ENCODE measurements at regions of chr22 and their contacts with region 1.

Region 1: DNA sequence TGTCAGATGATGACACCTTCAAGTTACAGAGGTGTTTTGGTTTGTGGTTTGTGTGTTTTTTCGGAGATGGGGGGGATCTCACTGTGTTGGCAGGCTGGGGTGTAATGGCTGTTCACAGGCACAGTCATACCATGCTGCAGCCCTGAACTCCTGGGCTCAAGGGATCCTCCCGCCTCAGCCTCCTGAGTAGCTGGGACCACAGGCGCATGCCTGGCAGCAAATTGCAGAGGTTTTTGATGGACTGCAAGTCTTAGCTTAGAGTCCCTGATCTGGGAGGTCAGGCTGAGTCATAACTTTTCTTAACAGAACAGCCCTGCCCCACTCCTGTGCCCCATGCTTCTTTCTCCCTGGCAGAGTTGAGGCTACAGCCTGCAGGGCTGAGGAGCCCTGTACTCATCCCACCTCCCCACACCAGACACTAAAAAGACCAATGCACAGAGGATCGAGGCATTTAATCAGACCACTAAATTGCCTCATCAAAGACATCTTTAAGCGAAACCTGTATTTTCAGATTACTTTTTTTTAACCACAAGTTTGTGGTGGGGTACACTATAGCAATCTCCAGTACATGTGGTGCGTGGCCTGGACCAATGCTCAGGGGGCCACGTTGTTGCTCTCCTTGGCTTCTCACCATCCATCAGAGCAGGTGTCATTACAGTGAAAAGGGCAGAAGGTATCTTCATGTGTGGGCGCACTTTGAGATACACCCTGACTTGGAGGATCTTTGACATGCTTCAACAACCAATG is 17.1 kb upstream of the ADORA2A start:
- DNase-seq: no peak
- H3K4me3 ChIP-seq: no peak overlapping the region
- H3K27ac ChIP-seq: no peak overlapping the region
- H3K4me1 ChIP-seq: no peaks in the 10 kb centered on the region
- H3K27me3 ChIP-seq: no peaks in the 10 kb centered on the region
- CTCF ChIP-seq: no peak
- POLR2A ChIP-seq: no peak

Region 2: GRCh38 chr22:24289114-24289513 is 121.2 kb before region 1 on chr22:
- intact Hi-C with region 1: loop called (anchors 10 kb)
- DNase-seq: no peak
- H3K4me3 ChIP-seq: no peak overlapping the region
- H3K27ac ChIP-seq: peak overlapping the region in 1 of 2 donors; percentile 49
- H3K4me1 ChIP-seq: peaks cover 22% of the 10 kb centered on the region
- H3K27me3 ChIP-seq: no peaks in the 10 kb centered on the region
- CTCF ChIP-seq: no peak
- POLR2A ChIP-seq: no peak

Region 3: GRCh38 chr22:24325105-24325757 is 85.1 kb before region 1 on chr22:
- intact Hi-C with region 1: loop called (anchors 10 kb)
- DNase-seq: peak; percentile 19
- H3K4me3 ChIP-seq: no peak overlapping the region
- H3K27ac ChIP-seq: no peak overlapping the region
- H3K4me1 ChIP-seq: no peaks in the 10 kb centered on the region
- H3K27me3 ChIP-seq: no peaks in the 10 kb centered on the region
- CTCF ChIP-seq: peak; percentile 16 to 73 (median 54)
- POLR2A ChIP-seq: no peak

Measured in prostate gland (tissue), 2 donors.